Transverse colon (tissue), 4 donors: ENCODE measurements at regions of chrX and their contacts with region 1.

Region 1: DNA sequence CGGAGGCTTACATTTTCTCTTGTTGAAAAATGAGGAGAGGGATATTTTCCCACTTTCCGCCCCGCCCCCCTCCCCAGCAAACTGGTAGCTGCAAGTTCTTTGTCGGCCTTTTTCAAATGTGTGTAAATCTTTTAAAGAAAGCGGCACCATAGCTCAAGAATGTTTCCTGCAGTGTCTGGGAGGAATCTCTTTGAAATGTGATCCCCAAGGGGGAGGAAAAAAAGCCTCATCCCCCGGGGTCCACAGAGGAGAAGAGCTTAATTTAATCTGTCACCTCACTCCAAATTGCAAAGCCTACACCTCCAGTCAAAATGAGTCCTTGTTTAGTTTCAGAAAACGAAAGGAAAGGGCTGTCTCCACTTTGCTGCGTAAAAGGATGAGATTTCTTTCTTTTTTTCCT is 34.8 kb downstream of the ASMT start:
- DNase-seq: no peak
- H3K4me3 ChIP-seq: no peak overlapping the region
- H3K27ac ChIP-seq: no peak overlapping the region
- H3K4me1 ChIP-seq: no peaks in the 10 kb centered on the region
- H3K27me3 ChIP-seq: no peaks in the 10 kb centered on the region
- CTCF ChIP-seq: no peak
- EP300 ChIP-seq: no peak
- POLR2A ChIP-seq: no peak

Region 2: DNA sequence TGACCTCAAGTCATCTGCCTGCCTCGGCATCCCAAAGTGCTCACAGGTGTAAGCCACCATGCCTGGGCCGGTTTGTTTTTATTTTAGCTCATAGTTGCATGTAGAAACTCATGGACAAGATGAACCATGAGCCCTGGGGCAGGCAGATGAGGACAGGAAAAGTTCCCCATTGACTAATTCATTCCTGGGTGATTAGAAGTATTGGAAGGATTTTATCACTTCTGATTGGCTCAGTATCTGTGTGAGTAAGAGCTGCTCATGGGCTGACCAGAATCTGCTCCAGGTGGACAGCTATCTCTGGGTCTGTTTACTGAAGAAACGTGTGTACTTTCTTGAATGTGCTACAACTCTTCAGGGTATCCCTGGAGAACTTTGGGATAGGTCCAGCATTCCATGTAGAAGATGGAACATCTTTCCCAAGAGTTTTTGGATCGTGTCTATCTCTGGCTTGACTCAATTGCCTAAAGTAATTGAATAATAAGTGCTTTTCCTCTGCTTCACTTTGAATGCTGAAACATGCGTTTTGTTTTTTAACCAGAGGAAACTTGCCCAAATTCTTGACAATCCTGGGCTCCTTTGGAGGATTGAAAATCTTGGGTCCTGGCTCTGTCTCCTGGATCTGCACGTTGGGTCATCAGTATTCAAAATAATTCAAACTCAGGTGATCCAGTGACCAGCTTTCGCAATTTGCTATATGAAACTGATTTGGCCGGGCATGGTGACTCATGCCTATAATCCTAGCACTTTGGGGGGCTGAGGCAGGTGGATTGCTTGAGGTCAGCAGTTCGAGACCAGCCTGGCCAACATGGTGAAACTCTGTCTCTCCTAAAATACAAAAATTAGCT is 939.8 kb after region 1 on chrX:
- in situ Hi-C with region 1: loop called in 3 of 4 experiments (anchors 25 kb)
- intact Hi-C with region 1: loop called (anchors 5 kb)
- DNase-seq: no peak
- H3K4me3 ChIP-seq: no peak overlapping the region
- H3K27ac ChIP-seq: no peak overlapping the region
- H3K4me1 ChIP-seq: peaks cover 0 to 6% (median 2%) of the 10 kb centered on the region in 4 donors
- H3K27me3 ChIP-seq: peaks cover 11% of the 10 kb centered on the region
- CTCF ChIP-seq: no peak
- EP300 ChIP-seq: no peak
- POLR2A ChIP-seq: no peak

Region 3: GRCh38 chrX:3184176-3184930 is 1534.7 kb after region 1 on chrX:
- in situ Hi-C with region 1: no loop called
- intact Hi-C with region 1: no loop called
- DNase-seq: no peak
- H3K4me3 ChIP-seq: no peak overlapping the region
- H3K27ac ChIP-seq: peak overlapping the region in 3 of 4 donors; percentile 25 to 48 (median 31)
- H3K4me1 ChIP-seq: no peaks in the 10 kb centered on the region
- H3K27me3 ChIP-seq: no peaks in the 10 kb centered on the region
- CTCF ChIP-seq: no peak
- EP300 ChIP-seq: no peak
- POLR2A ChIP-seq: no peak